Activated T-helper 1 cell treated with anti-CD3 and anti-CD28 coated beads, Interleukin-12 subunit alpha, Interleukin-12 subunit beta, Interleukin-2, Interleukin-4 antibody, amounts not matched to agents 30 ng/mL and 10 ng/mL and 1 ng/mL, durations not matched to agents 14 hours and 24 hours and 36 hours (primary cell): ENCODE measurements at regions of chr4 and their contacts with region 1.

Region 1: GRCh38 chr4:81827577-81828202 is 356.0 kb upstream of the RASGEF1B start:
- DNase-seq: no peak
- H3K4me3 Mint-ChIP-seq: no peak overlapping the region
- H3K27ac Mint-ChIP-seq: peak overlapping the region; percentile 11
- H3K4me1 Mint-ChIP-seq: peaks cover 13% of the 10 kb centered on the region
- H3K27me3 Mint-ChIP-seq: peaks cover 2% of the 10 kb centered on the region

Region 2: GRCh38 chr4:80540785-80541469 is 1286.8 kb before region 1 on chr4:
- intact Hi-C with region 1: loop called (anchors 5 kb)
- DNase-seq: no peak
- H3K4me3 Mint-ChIP-seq: no peak overlapping the region
- H3K27ac Mint-ChIP-seq: no peak overlapping the region
- H3K4me1 Mint-ChIP-seq: peaks cover 5% of the 10 kb centered on the region
- H3K27me3 Mint-ChIP-seq: peaks cover 11% of the 10 kb centered on the region

Region 3: GRCh38 chr4:81724925-81725329 is 102.8 kb before region 1 on chr4:
- intact Hi-C with region 1: loop called (anchors 5 kb)
- DNase-seq: peak; percentile 37
- H3K4me3 Mint-ChIP-seq: no peak overlapping the region
- H3K27ac Mint-ChIP-seq: no peak overlapping the region
- H3K4me1 Mint-ChIP-seq: peaks cover 17% of the 10 kb centered on the region
- H3K27me3 Mint-ChIP-seq: peaks cover 19% of the 10 kb centered on the region